ENCODE measurements at regions of chr10 and their contacts with region 1.

Region 1: DNA sequence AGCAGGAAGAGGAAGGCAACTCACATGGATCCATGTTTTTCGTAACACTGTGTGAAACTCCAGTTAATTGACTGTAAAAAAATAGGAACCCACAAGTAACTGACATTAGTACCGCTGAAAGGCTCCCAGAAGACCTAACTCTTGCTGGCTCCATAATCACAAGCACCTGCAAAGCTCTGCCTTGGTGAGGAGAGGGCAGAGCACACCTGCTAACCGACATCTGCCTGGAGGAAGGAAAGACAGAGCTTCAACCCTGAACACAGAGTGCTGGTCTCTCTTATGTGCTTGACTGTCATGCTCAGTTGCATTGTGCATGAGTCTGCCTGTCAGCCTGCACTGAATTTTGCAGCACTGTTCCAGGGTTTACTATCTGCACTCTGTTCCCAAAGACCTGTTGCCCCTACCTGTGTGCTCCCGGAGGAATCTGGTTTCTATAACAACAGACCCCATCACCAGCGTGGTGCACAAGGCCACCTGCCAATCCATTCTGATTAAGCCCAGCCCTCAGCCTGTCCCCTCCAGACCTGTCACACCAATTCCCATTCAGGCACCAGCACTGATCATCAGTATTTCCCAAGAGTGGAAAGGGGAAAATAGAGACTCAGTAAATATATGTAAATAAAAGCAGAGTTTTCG is 63.1 kb upstream of the ANKRD1 start:
- DNase-seq: no peak
- H3K4me3 ChIP-seq: no peak overlapping the region
- CTCF ChIP-seq: no peak

Region 2: GRCh38 chr10:91022924-91023699 is 39.1 kb after region 1 on chr10:
- in situ Hi-C with region 1: loop called (anchors 5 kb)
- DNase-seq: no peak
- H3K4me3 ChIP-seq: no peak overlapping the region
- CTCF ChIP-seq: no peak

Region 3: DNA sequence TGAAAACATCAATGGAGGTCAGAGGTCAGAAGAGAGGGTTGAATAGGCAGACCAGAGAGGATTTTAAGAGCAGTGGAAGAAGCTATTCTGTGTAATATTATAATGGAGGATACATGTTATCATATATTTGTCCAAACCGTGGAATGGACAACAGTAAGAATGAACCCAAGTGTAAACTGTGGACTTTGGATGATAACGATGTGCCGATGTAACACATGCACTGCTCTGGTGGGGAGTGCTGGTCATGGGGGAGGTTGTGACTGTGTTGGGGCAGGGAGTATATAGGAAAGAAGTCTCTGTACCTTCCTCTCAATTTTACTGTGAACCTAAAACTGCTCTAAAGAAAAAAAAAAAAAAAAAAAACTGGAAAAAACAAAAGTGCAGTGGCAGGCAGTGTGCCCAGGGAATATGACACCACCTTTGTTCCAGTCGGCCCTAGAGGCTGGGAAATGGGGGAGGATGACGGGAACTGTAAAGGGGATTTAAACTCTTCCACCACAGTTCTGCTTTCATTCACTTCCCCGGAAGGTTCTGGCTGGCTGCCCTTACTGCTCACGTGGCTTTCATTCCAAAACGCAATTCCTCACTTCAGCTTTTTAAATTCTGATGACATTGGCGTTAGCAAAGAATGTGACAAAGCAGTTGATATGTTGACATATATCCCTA is 50.6 kb after region 1 on chr10:
- in situ Hi-C with region 1: no loop called
- DNase-seq: peak; percentile 74
- H3K4me3 ChIP-seq: no peak overlapping the region
- CTCF ChIP-seq: no peak

Region 4: GRCh38 chr10:91077549-91078071 is 93.6 kb after region 1 on chr10:
- in situ Hi-C with region 1: loop called (anchors 5 kb)
- DNase-seq: no peak
- H3K4me3 ChIP-seq: no peak overlapping the region
- CTCF ChIP-seq: no peak

Measured in astrocyte of the cerebellum (primary cell).